Naive thymus-derived CD4-positive, alpha-beta T cell (primary cell): ENCODE measurements at regions of chr6 and their contacts with region 1.

Region 1: DNA sequence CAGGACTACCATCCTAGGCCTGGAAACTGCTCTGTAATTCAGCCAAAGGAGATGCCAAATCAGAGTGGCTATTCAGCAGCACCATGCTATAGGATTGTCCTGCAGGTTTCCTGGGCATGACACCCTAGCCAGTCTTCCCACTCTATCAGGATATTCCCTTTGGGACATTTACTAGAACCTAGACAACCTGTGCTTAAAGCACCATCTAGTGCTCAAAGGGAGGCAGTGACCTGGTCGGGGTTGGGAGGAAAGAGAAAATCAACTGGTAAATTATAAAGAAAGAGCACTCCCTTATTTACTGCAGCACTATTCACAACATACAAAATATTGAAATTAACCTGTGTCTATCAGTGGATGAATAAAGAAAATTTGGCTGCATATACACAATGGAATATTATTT is 67.2 kb upstream of the SMLR1 start:
- DNase-seq: no peak
- ATAC-seq: no peak
- H3K4me3 ChIP-seq: no peak overlapping the region
- H3K4me3 Mint-ChIP-seq: no peak overlapping the region
- H3K27ac ChIP-seq: no peak overlapping the region
- H3K27ac Mint-ChIP-seq: no peak overlapping the region
- H3K4me1 ChIP-seq: peaks cover 0 to 14% of the 10 kb centered on the region in 2 donors
- H3K4me1 Mint-ChIP-seq: peaks cover 0 to 11% (median 4%) of the 10 kb centered on the region in 7 donors
- H3K27me3 ChIP-seq: no peaks in the 10 kb centered on the region
- H3K27me3 Mint-ChIP-seq: peaks cover 4 to 28% (median 9%) of the 10 kb centered on the region in 5 donors

Region 2: GRCh38 chr6:130322673-130323268 is 437.2 kb before region 1 on chr6:
- CTCF ChIA-PET with region 1: no interaction called
- POLR2A ChIA-PET with region 1: no interaction called
- intact Hi-C with region 1: loop called in 1 of 2 experiments (anchors 1 kb)
- DNase-seq: peak in 8 of 9 donors; percentile 30 to 61 (median 56)
- ATAC-seq: peak; percentile 61
- H3K4me3 ChIP-seq: no peak overlapping the region
- H3K4me3 Mint-ChIP-seq: no peak overlapping the region
- H3K27ac ChIP-seq: no peak overlapping the region
- H3K27ac Mint-ChIP-seq: no peak overlapping the region
- H3K4me1 ChIP-seq: no peaks in the 10 kb centered on the region
- H3K4me1 Mint-ChIP-seq: peaks cover 0 to 16% (median 5%) of the 10 kb centered on the region in 7 donors
- H3K27me3 ChIP-seq: no peaks in the 10 kb centered on the region
- H3K27me3 Mint-ChIP-seq: peaks cover 0 to 33% (median 0%) of the 10 kb centered on the region in 5 donors